ENCODE measurements at regions of chr12 and their contacts with region 1.

Region 1: DNA sequence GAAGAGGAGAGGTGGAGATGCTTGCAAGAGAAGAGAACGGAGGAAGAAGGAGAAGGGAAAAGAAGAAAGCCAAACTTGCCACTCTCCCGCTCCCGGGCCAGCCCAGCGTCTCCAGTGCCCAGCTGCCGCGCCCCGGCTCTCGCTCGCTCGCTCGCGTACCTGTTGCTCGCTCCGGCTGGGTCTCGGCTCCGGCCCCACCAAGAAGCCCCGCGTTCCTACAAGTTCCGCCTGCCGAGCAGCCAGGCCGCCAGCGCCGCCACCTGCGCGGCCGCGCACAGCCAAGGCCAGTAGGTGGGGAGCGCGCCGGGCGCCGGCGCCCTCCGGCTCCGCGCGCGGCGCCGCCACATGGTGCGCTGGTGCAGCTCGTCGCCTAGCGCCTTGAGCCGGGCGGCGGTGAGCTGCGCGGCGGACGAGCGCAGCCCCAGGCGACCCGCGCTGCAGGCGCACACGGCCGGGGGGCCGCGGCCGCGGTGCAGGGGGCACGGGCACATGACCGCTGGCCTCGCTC is 370 bp downstream of the HRK start:
- DNase-seq: peak; percentile 71
- ATAC-seq: peak; percentile 41
- H3K4me3 Mint-ChIP-seq: peak overlapping the region; percentile 94
- H3K27ac Mint-ChIP-seq: peak overlapping the region; percentile 57; the same call in 1 of the 2 replicates
- H3K4me1 Mint-ChIP-seq: peaks cover 37% of the 10 kb centered on the region
- H3K27me3 Mint-ChIP-seq: peaks cover 87% of the 10 kb centered on the region
- CTCF ChIP-seq: no peak

Region 2: DNA sequence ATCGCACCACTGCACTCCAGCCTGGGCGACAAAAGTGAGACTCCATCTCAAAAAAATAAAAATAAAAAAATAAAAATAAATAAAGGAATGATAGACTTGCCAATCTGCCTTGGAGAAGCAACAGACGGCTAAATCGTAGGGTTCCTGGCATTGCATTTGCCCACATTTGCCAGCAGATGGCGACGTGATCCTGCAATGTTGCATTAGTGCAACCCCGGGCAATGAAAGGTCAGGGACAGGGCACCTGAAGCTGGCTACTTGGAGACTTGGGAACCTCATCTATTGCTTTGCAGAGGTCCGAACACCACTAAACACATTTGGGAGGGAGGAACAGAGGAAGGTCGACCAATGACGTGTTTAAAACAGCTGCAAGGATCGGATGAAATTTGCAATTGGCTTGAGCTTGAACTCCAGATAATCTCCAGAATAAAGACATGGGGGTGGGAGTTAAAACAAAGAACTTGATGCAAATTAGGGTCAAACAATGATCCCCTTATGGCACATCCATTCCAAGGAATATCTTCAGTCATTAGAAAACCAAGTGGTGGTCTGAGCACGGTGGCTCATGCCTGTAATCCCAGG is 177.6 kb before region 1 on chr12:
- CTCF ChIA-PET with region 1: interaction called, 14 read pairs
- POLR2A ChIA-PET with region 1: no interaction called
- DNase-seq: peak; percentile 85
- ATAC-seq: peak; percentile 97
- H3K4me3 Mint-ChIP-seq: no peak overlapping the region
- H3K27ac Mint-ChIP-seq: no peak overlapping the region
- H3K4me1 Mint-ChIP-seq: peaks cover 4% of the 10 kb centered on the region
- H3K27me3 Mint-ChIP-seq: no peaks in the 10 kb centered on the region
- CTCF ChIP-seq: peak; percentile 86

Region 3: DNA sequence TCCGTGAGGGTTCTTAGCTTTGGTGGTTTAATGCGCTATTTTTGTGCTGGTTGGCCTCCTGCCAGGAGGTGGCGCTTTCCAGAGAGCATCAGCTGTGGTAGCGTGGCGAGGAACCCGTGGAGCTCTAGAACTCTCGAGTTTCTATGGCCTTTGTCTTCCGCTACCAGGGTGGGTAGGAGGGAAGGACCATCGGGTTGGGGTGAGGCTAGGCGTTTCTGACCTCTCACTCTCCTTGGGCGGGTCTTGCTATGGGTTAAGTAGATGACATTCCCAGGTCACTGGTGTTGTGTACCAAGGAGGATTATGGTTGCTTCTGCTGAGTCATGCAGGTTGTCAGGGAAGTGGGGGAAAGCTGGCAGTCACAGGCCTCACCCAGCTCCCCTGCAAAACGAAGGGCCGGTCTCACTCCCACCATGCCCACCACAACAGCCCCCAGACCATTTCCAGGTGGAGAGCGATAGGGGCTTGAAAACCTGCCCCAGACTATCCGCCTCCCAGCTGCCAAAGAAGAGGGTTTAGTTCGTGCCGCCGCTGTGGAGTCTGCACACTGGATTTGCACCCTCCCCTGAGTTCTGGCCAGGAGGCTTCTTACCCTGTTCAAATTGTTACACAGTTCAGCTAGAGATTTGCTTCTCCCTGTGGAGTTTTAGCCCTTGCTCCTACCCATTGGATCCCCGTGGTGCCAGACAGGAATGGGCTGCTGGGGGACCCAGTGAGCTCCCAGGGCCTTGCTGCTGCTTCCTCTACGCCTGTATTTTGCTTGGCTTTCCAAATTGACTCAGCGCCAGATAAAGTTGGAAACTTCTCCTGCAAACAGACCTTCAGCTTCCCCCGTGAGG is 120.9 kb before region 1 on chr12:
- CTCF ChIA-PET with region 1: interaction called, 46 read pairs
- POLR2A ChIA-PET with region 1: no interaction called
- DNase-seq: peak; percentile 77
- ATAC-seq: peak; percentile 98
- H3K4me3 Mint-ChIP-seq: peak overlapping the region; percentile 51
- H3K27ac Mint-ChIP-seq: peak overlapping the region; percentile 69
- H3K4me1 Mint-ChIP-seq: peaks cover 8% of the 10 kb centered on the region
- H3K27me3 Mint-ChIP-seq: no peaks in the 10 kb centered on the region
- CTCF ChIP-seq: no peak; the same call in 1 of the 2 replicates

Region 4: GRCh38 chr12:116855744-116856470 is 25.0 kb before region 1 on chr12:
- CTCF ChIA-PET with region 1: interaction called, 10 read pairs
- POLR2A ChIA-PET with region 1: no interaction called
- DNase-seq: no peak
- ATAC-seq: no peak
- H3K4me3 Mint-ChIP-seq: no peak overlapping the region
- H3K27ac Mint-ChIP-seq: no peak overlapping the region
- H3K4me1 Mint-ChIP-seq: peaks cover 10% of the 10 kb centered on the region
- H3K27me3 Mint-ChIP-seq: no peaks in the 10 kb centered on the region
- CTCF ChIP-seq: no peak

Measured in WTC11 (cell line).